Dorsolateral prefrontal cortex (tissue), 120 donors: ENCODE measurements at regions of chr7 and their contacts with region 1.

Region 1: GRCh38 chr7:1569833-1570633 is at the start of gene PSMG3:
- DNase-seq: peak; percentile 71 to 95 (median 90)
- H3K4me3 ChIP-seq: peak within 1 kb of the TSS; percentile 60 to 98 (median 91)
- H3K27ac ChIP-seq: peak within 1 kb of the TSS; percentile 42 to 98 (median 93)
- H3K27me3 ChIP-seq: no peaks in the 10 kb centered on the region
- CTCF ChIP-seq: peak in 48 of 56 donors; percentile 2 to 58 (median 36)
- total RNA-seq, gene PSMG3: 14.7 to 44.6 (median 28.9) TPM

Region 2: DNA sequence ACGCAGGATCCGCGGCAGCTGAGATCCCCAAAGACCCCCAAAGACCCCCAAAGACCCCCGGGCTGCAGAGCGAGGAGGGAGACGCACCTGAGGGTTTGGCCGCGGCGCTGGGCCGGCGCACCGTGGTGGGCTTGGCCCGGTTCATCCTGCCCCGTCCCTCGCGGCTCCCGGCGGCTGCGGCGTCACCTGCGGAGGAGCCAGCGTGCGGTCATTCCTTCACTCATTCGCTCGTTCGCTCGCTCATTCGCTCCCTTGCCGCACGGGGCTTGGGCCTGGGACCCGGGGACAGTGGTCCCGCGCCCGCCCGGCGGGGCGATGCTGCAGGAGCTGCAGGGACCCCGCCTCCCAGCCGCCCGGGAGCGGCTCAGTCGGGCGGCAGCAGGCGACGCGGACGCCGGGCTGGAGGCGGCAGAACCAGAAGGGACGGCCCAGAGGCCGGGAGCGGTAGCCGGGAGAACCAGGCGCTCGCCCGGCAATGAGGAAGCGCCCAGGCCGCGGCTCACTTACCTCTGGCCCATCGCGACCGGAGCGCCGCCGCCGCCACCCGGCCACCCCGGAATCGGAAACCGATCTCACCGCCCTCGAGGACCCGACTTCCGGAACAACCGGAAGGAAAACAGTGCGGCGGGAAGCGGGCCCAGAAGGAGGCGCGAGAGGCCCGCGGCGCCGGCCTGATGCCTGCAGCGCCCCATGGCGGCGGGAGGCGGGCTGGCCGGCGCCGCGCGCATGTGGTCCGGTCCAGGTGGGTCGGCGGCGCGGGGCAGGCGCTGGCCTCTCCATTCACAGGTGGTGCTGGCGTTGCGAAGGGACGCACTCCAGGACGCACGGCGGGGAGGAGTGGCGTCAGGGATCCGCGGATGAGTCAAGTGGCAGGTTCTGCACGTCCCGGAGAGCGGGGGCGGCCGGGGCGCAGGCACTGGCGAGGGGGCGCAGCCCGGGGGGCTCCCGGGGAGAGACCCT is 65.9 kb before region 1 on chr7 and contains the start of gene INTS1:
- intact Hi-C with region 1: loop called in 1 of 2 experiments (anchors 5 kb)
- DNase-seq: peak; percentile 81 to 95 (median 92)
- H3K4me3 ChIP-seq: peak within 1 kb of the TSS; percentile 66 to 100 (median 99)
- H3K27ac ChIP-seq: peak within 1 kb of the TSS in 42 of 59 donors; percentile 3 to 83 (median 62)
- H3K27me3 ChIP-seq: no peaks in the 10 kb centered on the region
- CTCF ChIP-seq: peak; percentile 57 to 99 (median 92)
- total RNA-seq, gene INTS1: 86.1 to 155 (median 115) TPM

Region 3: DNA sequence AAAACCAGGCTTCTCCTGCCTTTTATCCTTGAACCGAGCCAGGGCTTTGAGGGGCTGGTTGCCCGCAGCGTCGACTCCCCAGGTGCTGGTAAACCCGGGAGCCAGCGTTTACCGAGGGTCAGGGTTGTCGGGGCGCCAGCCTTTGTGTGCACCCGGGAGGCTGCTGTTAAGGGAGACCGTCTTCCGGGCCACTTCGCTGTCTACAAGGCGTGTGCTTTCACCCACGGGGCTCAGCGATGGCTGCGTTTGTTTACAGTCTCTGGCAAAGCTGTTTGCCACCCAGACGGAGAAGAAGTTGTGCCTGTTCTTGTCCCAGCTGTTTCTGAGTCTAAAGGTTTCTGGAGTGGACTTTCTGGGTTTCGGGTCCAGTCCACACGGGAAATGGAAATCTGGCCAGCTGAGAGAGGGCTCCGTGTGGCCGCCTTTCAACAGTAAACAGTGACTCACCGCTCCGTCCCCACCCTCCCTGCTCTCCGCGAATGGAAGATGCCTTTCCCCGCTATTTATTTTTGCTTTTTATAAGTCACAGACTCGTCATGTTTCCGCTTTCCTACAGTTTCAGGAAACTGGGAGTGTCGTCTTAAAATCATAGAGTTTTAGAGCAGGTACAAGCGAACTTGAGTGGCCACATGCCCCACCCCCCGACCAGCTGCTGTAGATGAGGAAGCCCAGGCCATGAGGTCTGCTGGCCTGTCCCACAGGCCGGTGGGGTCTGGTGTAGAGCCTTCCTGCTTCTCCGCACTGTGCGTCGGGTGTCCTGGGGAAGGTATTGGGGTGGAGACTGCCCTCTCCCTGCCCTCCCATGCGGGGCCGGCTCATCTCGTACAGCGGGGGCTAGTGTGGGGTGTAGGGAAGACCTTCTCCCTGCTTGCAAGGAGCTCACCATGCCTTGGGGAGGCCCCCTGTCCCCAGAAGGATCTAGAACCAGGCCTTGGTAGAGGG is 37.3 kb before region 1 on chr7:
- intact Hi-C with region 1: loop called (anchors 2 to 5 kb)
- DNase-seq: peak in 5 of 10 donors; percentile 58 to 83 (median 69)
- H3K4me3 ChIP-seq: peak overlapping the region; percentile 34 to 74 (median 62)
- H3K27ac ChIP-seq: peak overlapping the region; percentile 64 to 98 (median 92)
- H3K27me3 ChIP-seq: no peaks in the 10 kb centered on the region
- CTCF ChIP-seq: peak in 1 of 56 donors; percentile 6

Region 4: DNA sequence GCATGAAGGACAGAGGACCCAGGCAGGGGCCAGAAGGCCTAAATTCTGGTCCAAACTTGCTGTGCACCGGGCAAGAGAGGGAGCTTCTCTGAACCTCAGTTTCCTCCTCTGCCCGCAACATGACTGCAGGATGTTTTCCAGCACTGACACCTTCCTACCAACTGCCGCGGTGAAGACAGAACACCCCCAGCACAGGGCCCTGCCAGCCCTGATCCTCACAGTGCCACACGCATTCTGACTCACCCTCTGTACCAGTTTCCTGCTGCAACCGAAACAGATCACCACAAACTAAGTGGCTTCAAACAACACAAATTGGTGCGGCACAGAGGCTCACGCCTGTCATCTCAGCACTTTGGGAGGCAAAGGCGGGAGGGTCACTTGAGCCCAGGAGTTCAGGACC is 644.6 kb after region 1 on chr7:
- intact Hi-C with region 1: loop called in 1 of 2 experiments (anchors 10 kb)
- DNase-seq: no peak
- H3K4me3 ChIP-seq: no peak overlapping the region
- H3K27ac ChIP-seq: no peak overlapping the region
- H3K27me3 ChIP-seq: no peaks in the 10 kb centered on the region
- CTCF ChIP-seq: no peak

Region 5: GRCh38 chr7:2555121-2556052 is 985.4 kb after region 1 on chr7 and contains the start of gene BRAT1:
- intact Hi-C with region 1: loop called in 1 of 2 experiments (anchors 10 kb)
- DNase-seq: peak; percentile 92 to 98 (median 96)
- H3K4me3 ChIP-seq: peak within 1 kb of the TSS; percentile 67 to 96 (median 90)
- H3K27ac ChIP-seq: peak within 1 kb of the TSS; percentile 89 to 100 (median 99)
- H3K27me3 ChIP-seq: no peaks in the 10 kb centered on the region
- CTCF ChIP-seq: peak in 41 of 56 donors; percentile 4 to 63 (median 30)
- total RNA-seq, gene BRAT1: 16.7 to 38.4 (median 24.9) TPM